BJ (cell line): ENCODE measurements at regions of chr7 and their contacts with region 1.

Region 1: GRCh38 chr7:130758429-130759056 is 24.5 kb upstream of the KLF14 start:
- DNase-seq: peak; percentile 5
- H3K4me3 ChIP-seq: no peak overlapping the region
- H3K27me3 ChIP-seq: peaks cover 1% of the 10 kb centered on the region
- CTCF ChIP-seq: peak; percentile 63

Region 2: GRCh38 chr7:130063036-130063435 is 695.5 kb before region 1 on chr7:
- CTCF ChIA-PET with region 1: interaction called, 10 read pairs
- POLR2A ChIA-PET with region 1: no interaction called
- DNase-seq: no peak
- H3K4me3 ChIP-seq: no peak overlapping the region
- H3K27me3 ChIP-seq: no peaks in the 10 kb centered on the region
- CTCF ChIP-seq: peak; percentile 84

Region 3: GRCh38 chr7:130901209-130901783 is 142.8 kb after region 1 on chr7:
- CTCF ChIA-PET with region 1: no interaction called
- POLR2A ChIA-PET with region 1: no interaction called
- DNase-seq: peak; percentile 73
- H3K4me3 ChIP-seq: no peak overlapping the region
- H3K27me3 ChIP-seq: no peaks in the 10 kb centered on the region
- CTCF ChIP-seq: no peak